ENCODE measurements at regions of chr18 and their contacts with region 1.

Region 1: GRCh38 chr18:66764230-66764629 is 160.3 kb upstream of the CDH19 start:
- DNase-seq: peak in 17 of 42 donors; percentile 3 to 54 (median 20)

Region 2: GRCh38 chr18:67179726-67180125 is 415.5 kb after region 1 on chr18:
- intact Hi-C with region 1: loop called (anchors 10 kb)
- DNase-seq: no peak

Measured in head of caudate nucleus (tissue), 42 donors.